Heart left ventricle (tissue), 16 donors: ENCODE measurements at regions of chr2 and their contacts with region 1.

Region 1: DNA sequence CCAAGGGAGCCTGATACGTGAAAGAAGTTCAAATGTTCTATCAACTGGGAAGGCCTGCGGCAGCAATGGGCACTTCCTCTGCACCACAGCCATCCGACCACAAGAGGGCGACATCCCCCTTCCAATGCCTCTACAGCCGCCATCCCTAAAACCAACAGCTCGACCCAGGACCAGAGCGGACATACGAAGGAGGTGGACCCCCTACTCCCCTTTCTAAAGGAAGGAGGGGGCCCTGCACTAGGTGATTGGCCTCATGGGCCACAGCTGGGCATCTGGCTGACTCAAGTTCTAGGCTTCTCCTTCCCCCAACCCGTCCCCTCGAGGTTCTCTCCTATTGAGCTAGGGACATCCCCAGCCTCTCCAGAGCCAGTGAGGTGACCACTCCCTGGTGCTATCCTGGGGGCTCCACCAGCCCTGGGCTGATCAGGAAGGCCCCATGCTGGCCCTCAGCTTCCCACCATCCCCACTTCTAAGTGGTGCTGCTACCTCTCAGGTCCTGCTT is 217.2 kb downstream of the TNS1 start:
- DNase-seq: peak; percentile 72 to 87 (median 79)
- ATAC-seq: peak; percentile 69 to 72 (median 71)
- H3K4me3 ChIP-seq: no peak overlapping the region
- H3K27ac ChIP-seq: peak overlapping the region in 1 of 12 donors; percentile 33
- H3K4me1 ChIP-seq: peaks cover 0 to 31% (median 21%) of the 10 kb centered on the region in 12 donors
- H3K27me3 ChIP-seq: no peaks in the 10 kb centered on the region
- CTCF ChIP-seq: peak; percentile 94 to 99 (median 96)
- POLR2A ChIP-seq: no peak

Region 2: DNA sequence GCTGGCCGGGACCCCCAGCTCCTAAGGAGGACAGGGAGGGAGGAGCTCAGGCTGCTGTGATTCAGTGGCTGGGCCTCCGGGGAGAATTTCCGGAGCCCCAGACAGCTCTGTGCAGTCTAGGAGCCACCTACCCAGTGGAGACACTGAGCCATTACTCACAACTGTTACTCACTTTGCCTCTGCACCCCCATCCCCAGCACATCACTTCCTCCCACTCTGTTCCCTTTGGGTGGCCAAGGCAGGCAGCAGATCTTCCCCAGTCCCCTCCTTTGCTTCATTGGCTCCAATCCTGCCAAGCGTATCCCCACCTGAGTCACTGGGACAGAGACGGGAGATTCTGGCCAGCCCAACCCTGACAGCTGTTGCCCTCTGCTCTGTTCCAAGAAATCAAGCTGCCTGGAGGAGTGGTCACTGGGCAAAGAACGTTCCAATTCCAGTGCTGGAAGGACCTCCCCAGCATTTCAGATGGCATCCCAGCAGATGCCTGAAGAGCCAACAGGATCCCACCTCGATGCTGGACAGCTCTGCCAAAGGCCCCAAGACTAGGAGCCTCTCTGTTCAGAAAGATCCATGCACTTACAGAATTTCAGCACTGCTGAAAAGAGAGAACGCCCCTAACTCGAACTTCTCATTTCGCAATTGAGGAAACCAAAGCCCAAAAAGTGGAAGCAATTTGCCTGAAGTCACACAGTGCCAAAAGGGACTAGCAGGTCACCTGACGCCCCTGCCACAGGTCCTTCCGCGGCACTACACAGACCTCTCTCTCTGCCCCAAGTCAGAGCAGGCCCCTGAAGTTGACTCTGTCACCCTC is 148.9 kb after region 1 on chr2:
- intact Hi-C with region 1: loop called in 1 of 10 experiments (anchors 5 kb)
- DNase-seq: peak in 4 of 5 donors; percentile 67 to 90 (median 74)
- ATAC-seq: peak; percentile 8 to 62 (median 40)
- H3K4me3 ChIP-seq: peak overlapping the region in 10 of 12 donors; percentile 2 to 95 (median 28)
- H3K27ac ChIP-seq: peak overlapping the region; percentile 92 to 99 (median 96)
- H3K4me1 ChIP-seq: peaks cover 37 to 100% (median 99%) of the 10 kb centered on the region in 12 donors
- H3K27me3 ChIP-seq: no peaks in the 10 kb centered on the region
- CTCF ChIP-seq: no peak
- POLR2A ChIP-seq: no peak

Region 3: GRCh38 chr2:217988014-217988839 is 202.6 kb after region 1 on chr2:
- intact Hi-C with region 1: loop called (anchors 1 to 2 kb)
- DNase-seq: peak; percentile 86 to 91 (median 88)
- ATAC-seq: peak; percentile 90 to 92 (median 90)
- H3K4me3 ChIP-seq: peak overlapping the region in 3 of 12 donors; percentile 7 to 37 (median 22)
- H3K27ac ChIP-seq: peak overlapping the region; percentile 48 to 91 (median 83)
- H3K4me1 ChIP-seq: peaks cover 4 to 41% (median 29%) of the 10 kb centered on the region in 12 donors
- H3K27me3 ChIP-seq: no peaks in the 10 kb centered on the region
- CTCF ChIP-seq: peak; percentile 78 to 94 (median 91)
- POLR2A ChIP-seq: no peak

Region 4: GRCh38 chr2:218010140-218010983 is 224.8 kb after region 1 on chr2:
- intact Hi-C with region 1: no loop called
- DNase-seq: peak; percentile 54 to 81 (median 59)
- ATAC-seq: peak; percentile 50 to 81 (median 78)
- H3K4me3 ChIP-seq: peak overlapping the region; percentile 34 to 65 (median 55)
- H3K27ac ChIP-seq: peak overlapping the region in 4 of 12 donors; percentile 31 to 46 (median 38)
- H3K4me1 ChIP-seq: peaks cover 0 to 34% (median 20%) of the 10 kb centered on the region in 12 donors
- H3K27me3 ChIP-seq: peaks cover 0 to 20% (median 0%) of the 10 kb centered on the region in 9 donors
- CTCF ChIP-seq: peak; percentile 35 to 79 (median 58)
- POLR2A ChIP-seq: no peak

Region 5: GRCh38 chr2:218033590-218034496 is 248.2 kb after region 1 on chr2:
- intact Hi-C with region 1: loop called (anchors 1 to 10 kb)
- DNase-seq: peak in 3 of 5 donors; percentile 21 to 61 (median 29)
- ATAC-seq: no peak
- H3K4me3 ChIP-seq: peak overlapping the region in 4 of 12 donors; percentile 27 to 49 (median 47)
- H3K27ac ChIP-seq: peak overlapping the region in 1 of 12 donors; percentile 42
- H3K4me1 ChIP-seq: peaks cover 0 to 18% (median 9%) of the 10 kb centered on the region in 12 donors
- H3K27me3 ChIP-seq: peaks cover 0 to 5% (median 0%) of the 10 kb centered on the region in 9 donors
- CTCF ChIP-seq: no peak
- POLR2A ChIP-seq: no peak

Region 6: DNA sequence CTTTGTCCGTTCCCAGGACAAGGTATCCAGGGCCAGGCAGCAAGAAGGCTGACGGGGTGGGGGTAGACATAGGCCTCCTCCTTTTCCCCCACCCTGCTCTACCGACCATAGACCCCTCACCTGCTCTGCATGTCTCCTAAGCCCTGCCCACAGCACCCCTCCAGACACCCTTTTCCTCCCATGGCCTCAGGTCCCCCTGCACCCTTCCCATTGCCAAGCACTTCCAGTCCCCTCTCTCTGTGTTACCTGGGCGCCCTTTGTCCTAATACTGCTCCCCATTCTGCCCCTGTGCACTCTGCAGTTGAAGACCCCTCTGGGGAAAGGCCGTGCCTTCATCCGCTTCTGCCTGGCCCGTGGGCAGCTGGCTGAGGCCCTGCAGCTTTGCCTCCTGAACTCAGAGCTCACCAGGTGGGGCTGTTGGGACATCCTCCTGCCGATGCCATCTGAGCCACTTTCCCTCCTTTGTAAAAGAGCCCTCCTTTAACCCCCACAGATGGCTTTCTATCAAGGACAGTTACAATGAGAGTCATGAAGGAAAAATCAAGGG is 287.0 kb after region 1 on chr2:
- intact Hi-C with region 1: loop called in 9 of 10 experiments (anchors 1 to 10 kb)
- DNase-seq: no peak
- ATAC-seq: no peak
- H3K4me3 ChIP-seq: no peak overlapping the region
- H3K27ac ChIP-seq: no peak overlapping the region
- H3K4me1 ChIP-seq: peaks cover 0 to 10% (median 1%) of the 10 kb centered on the region in 12 donors
- H3K27me3 ChIP-seq: peaks cover 0 to 9% (median 0%) of the 10 kb centered on the region in 9 donors
- CTCF ChIP-seq: no peak
- POLR2A ChIP-seq: no peak